ENCODE measurements at regions of chr15 and their contacts with region 1.

Region 1: DNA sequence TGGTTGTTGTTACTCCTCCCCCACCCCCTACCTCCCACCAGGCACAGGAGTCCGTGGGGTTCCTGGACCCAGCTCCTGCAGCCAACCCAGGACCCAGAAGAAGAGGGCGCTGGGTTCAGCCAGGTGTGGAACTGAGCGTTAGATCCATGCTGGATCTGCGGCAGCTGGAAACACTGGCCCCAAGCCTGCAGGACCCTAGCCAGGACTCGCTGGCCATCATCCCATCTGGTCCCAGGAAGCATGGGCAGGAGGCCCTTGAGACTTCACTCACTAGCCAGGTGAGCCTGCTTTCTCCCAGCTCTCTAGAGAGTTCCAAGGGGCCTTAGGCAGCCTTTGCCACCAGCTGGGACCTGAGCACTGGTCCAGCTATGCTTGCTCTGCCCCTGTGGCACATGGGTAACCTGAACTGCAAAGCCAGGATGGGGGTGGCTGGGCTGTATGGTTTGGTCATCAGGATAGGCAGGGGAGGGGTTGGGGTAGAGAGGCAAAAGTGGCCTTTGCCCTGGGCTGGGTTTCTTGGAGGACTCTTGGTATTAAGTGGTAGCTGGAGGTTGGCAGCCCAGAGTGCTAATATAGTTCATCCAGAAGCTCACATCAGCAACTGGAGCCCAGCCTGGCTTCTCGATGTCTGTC is 7.0 kb upstream of the JMJD7 start:
- DNase-seq: peak; percentile 60 to 73
- H3K4me3 ChIP-seq: no peak overlapping the region
- H3K27ac ChIP-seq: no peak overlapping the region
- H3K4me1 ChIP-seq: no peaks in the 10 kb centered on the region
- H3K27me3 ChIP-seq: no peaks in the 10 kb centered on the region
- CTCF ChIP-seq: no peak
- POLR2A ChIP-seq: no peak

Region 2: GRCh38 chr15:41493205-41493901 is 327.6 kb before region 1 on chr15 and contains the start of gene ITPKA:
- intact Hi-C with region 1: no loop called
- DNase-seq: peak; percentile 65 to 74
- H3K4me3 ChIP-seq: peak within 1 kb of the TSS in 2 of 3 donors; percentile 50 to 52
- H3K27ac ChIP-seq: no peak within 1 kb of the TSS
- H3K4me1 ChIP-seq: peaks cover 26 to 29% of the 10 kb centered on the region in 2 donors
- H3K27me3 ChIP-seq: peaks cover 4% of the 10 kb centered on the region
- CTCF ChIP-seq: no peak
- POLR2A ChIP-seq: peak in 1 of 2 donors; percentile 29
- total RNA-seq, gene ITPKA: 0.83 to 1.5 TPM in 2 of 4 donors, not detected in the others

Region 3: GRCh38 chr15:41904541-41905005 is 83.7 kb after region 1 on chr15:
- intact Hi-C with region 1: loop called (anchors 5 kb)
- DNase-seq: peak; percentile 76 to 78
- H3K4me3 ChIP-seq: no peak overlapping the region
- H3K27ac ChIP-seq: no peak overlapping the region
- H3K4me1 ChIP-seq: peaks cover 0 to 5% of the 10 kb centered on the region in 2 donors
- H3K27me3 ChIP-seq: no peaks in the 10 kb centered on the region
- CTCF ChIP-seq: peak; percentile 66 to 93 (median 88)
- POLR2A ChIP-seq: no peak

Measured in thyroid gland (tissue), 4 donors.